ENCODE measurements at regions of chr18 and their contacts with region 1.

Region 1: GRCh38 chr18:67217551-67218166 is 298.9 kb downstream of the DSEL start:
- DNase-seq: peak in 1 of 2 donors; percentile 49
- H3K4me3 ChIP-seq: no peak overlapping the region
- CTCF ChIP-seq: no peak
- POLR2A ChIP-seq: no peak

Region 2: DNA sequence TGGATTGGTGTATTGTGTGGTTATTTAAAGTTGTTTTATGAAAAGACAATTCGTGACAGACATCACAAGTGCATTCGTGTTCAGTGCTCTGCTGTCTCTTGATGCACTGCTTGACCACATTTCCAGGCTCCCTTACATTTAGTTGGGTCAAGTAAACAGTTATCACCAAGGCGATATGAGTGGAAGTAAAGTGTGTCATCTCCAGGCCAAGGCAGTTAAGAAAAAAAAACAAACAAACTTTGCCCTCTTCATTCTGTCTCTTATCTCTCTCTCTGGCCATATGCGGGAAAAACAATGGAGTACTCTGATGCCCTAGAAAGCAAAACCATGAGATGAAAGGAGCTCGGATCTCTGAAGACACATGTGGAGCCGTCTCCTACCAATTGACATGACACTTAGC is 167.8 kb after region 1 on chr18:
- intact Hi-C with region 1: no loop called
- DNase-seq: no peak
- H3K4me3 ChIP-seq: no peak overlapping the region
- CTCF ChIP-seq: no peak
- POLR2A ChIP-seq: no peak

Region 3: GRCh38 chr18:68648191-68648590 is 1430.5 kb after region 1 on chr18:
- intact Hi-C with region 1: loop called (anchors 5 kb)
- DNase-seq: no peak
- H3K4me3 ChIP-seq: no peak overlapping the region
- CTCF ChIP-seq: no peak
- POLR2A ChIP-seq: no peak

Region 4: DNA sequence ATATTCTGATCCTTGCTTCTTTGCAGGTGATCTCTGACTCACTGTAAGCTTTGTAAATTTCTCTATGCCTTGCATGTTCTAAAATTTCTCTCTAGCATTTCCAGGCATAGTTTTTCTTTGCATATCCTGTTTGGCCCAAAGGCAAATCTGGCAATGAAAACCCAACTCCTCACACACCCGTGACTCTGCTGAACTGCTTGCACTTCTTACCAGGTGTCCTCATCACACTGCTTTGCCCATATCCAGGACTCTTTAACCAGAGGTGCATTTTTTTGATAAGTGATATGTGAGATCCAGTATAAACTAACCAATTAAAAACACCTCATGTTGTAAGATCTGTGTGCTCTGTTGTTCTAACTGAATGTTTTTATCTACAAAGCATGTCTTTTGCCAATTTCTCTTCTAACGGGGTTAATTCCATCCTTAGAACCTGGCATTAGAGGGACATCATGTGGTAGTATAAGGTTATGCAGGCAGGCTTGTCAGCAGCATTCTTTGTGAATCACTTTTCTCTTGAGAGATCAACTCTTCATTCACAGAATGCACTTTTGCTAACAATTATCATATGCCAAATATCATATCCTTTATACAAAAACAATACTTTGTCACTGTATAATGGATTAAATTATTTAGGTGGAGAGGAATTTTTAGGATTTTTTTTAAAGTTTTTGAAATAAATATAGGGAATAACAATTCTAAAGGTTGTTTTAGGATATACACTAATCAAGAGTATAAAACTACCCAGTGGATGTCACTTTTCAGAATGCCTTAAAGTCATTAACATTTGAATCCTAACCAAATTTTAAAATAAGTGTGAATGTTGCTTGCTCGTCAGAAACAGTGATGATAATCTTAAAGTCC is 1518.1 kb after region 1 on chr18:
- intact Hi-C with region 1: loop called (anchors 10 kb)
- DNase-seq: no peak
- H3K4me3 ChIP-seq: no peak overlapping the region
- CTCF ChIP-seq: no peak
- POLR2A ChIP-seq: no peak

Measured in lower leg skin (tissue), 4 donors.